ENCODE measurements at regions of chr6 and their contacts with region 1.

Region 1: DNA sequence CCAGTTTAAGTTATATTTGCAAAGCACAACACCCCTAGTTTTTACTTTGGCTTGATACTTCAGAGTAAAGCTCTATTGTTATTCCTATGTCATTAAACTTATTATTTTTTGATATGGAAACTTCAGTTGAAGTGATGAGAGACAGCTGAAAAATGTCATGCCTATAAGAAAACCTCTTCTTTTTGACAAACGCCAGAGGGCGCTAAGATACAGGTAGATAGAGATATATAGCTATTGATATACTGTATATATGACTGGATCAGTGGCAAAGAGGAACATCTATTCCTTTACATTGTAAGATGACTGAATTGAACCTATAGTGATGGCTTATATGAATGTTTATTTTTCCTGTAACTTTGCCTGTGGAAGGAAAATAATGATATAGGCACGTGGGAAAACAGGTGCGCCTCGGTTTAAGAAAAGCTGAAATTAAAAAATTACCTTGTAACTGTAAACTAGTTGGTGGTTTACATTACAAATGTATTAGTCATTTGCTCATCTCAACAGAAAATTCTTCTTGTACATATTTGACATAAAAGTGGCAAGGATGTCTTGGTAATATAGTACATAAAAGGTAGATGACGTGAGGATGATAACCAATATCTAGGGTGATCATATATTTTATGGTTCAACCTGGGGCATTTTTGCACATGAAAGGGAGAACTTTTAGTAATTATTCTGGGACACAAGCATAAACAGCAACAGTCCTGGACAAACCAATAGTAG is 74.1 kb downstream of the LAMA4 start:
- DNase-seq: peak; percentile 58
- CTCF ChIP-seq: peak; percentile 61

Region 2: DNA sequence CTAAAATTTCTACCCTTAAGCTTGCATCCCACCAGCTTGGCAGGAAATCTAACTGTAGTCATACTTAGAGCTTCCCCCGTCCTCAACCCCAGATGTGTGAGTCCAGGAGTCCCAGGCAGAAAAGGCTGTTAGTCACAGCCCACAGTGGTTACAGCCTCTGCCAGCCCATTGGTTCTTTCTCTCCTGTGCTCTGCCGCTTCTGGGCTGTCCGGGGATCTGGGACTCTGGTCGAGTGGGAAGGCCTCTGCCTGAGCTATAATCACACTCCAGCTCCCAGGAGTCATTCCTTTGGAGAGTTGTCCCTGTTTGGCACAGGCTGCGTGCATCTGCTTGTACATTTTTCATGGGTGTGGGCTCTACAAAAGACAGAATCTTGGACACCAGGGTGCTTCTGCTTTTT is 261.4 kb before region 1 on chr6:
- CTCF ChIA-PET with region 1: no interaction called
- POLR2A ChIA-PET with region 1: no interaction called
- DNase-seq: no peak
- CTCF ChIP-seq: no peak

Region 3: DNA sequence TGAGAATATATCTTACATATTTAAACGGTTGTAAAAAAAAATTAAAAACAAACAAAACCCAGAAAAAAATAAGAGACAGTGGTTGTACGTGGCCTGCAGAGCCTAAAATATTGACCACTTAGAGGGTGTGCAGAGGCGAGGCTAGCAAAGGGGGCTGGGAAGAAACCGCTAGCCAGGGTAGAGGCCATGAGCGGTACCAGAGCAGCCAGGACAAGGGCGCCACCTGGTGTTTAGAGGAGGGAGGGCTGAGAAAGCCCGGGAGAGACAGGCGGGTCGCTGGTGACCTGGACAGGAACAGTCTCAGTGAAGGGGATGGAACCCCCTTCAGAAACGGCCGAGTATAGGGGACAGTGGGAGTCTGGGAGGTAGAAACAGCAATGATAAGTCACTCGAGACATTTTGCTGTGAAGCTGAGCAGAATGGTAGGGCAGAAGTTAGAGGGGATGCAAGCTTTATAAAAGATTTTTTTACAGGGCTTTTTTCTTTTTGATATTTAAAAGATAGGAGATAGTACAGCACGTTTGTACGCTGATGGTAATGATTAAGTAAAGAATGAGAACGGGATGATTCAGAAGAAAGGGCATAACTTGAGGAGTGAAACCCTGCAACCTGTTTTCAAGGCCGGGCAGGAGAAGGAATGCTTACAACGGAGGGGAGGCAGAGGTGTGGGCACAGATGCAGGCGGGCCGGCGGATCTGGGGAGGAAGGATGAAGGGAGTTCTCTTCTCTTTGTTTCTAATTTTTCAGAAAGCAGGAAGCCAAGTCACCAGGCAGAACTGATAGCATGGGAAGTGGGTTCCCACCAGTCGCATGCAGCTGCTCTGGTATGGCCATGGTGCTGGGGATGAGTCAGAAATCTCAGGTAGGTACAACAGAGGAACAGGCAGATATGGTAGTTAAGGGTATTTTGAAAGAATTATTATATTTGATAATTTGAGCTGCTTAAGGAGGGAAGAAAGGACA is 16.7 kb before region 1 on chr6:
- CTCF ChIA-PET with region 1: interaction called, 44 read pairs
- POLR2A ChIA-PET with region 1: no interaction called
- DNase-seq: peak; percentile 78
- CTCF ChIP-seq: peak; percentile 98

Region 4: GRCh38 chr6:112296122-112296521 is 115.9 kb after region 1 on chr6:
- CTCF ChIA-PET with region 1: interaction called, 13 read pairs
- POLR2A ChIA-PET with region 1: no interaction called
- DNase-seq: no peak
- CTCF ChIP-seq: peak; percentile 28

Region 5: GRCh38 chr6:112311950-112312547 is 131.8 kb after region 1 on chr6:
- CTCF ChIA-PET with region 1: interaction called, 127 read pairs
- POLR2A ChIA-PET with region 1: no interaction called
- DNase-seq: peak; percentile 47
- CTCF ChIP-seq: peak; percentile 48

Region 6: GRCh38 chr6:112502351-112503090 is 322.3 kb after region 1 on chr6:
- CTCF ChIA-PET with region 1: no interaction called
- POLR2A ChIA-PET with region 1: no interaction called
- DNase-seq: no peak
- CTCF ChIP-seq: no peak

Measured in GM10248 (cell line).